PC-3 (cell line): ENCODE measurements at regions of chr10 and their contacts with region 1.

Region 1: GRCh38 chr10:33008499-33009243 is 50.6 kb upstream of the ITGB1 start:
- DNase-seq: peak; percentile 100
- ATAC-seq: peak; percentile 12
- H3K4me3 ChIP-seq: peak overlapping the region; percentile 29
- H3K27ac ChIP-seq: peak overlapping the region; percentile 66
- H3K4me1 ChIP-seq: peaks cover 63% of the 10 kb centered on the region
- H3K27me3 ChIP-seq: no peaks in the 10 kb centered on the region
- CTCF ChIP-seq: peak; percentile 100

Region 2: GRCh38 chr10:32378363-32379317 is 630.0 kb before region 1 on chr10:
- CTCF ChIA-PET with region 1: interaction called, 3 read pairs
- POLR2A ChIA-PET with region 1: interaction called, 3 read pairs
- intact Hi-C with region 1: loop called (anchors 2 kb)
- DNase-seq: peak; percentile 96
- ATAC-seq: peak; percentile 90
- H3K4me3 ChIP-seq: peak overlapping the region; percentile 74
- H3K27ac ChIP-seq: peak overlapping the region; percentile 68
- H3K4me1 ChIP-seq: peaks cover 55% of the 10 kb centered on the region
- H3K27me3 ChIP-seq: no peaks in the 10 kb centered on the region
- CTCF ChIP-seq: no peak

Region 3: DNA sequence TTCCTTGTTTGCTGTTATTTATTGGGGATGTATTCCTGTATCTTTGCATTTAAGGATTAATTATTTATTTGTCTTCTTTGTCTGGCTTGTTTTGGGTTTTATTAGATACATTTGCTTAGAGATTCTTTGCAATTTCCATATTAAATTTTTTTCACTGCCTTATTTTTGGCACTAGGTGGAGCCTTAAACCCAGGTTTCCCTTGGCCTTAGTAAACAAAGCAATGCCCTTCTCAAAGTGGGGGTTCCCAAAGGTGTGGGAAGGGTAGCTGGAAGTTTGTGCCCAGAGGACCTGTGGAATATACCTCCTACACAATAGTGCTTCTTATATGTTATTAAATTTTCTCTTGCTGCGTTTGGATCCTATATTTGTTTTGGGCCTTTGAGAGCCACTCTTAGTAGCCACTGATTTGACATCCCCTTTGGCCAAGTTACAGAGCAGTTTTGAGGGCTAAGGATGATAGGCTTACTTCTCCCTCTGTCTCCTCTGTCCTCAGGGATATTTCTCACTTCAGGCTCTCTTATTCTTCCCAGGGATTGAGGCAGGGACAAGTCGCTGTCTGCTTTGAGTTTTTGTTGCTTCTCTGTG is 213.0 kb before region 1 on chr10:
- CTCF ChIA-PET with region 1: interaction called, 4 read pairs
- POLR2A ChIA-PET with region 1: no interaction called
- intact Hi-C with region 1: loop called (anchors 1 kb)
- DNase-seq: peak; percentile 73
- ATAC-seq: peak; percentile 73
- H3K4me3 ChIP-seq: no peak overlapping the region
- H3K27ac ChIP-seq: no peak overlapping the region
- H3K4me1 ChIP-seq: no peaks in the 10 kb centered on the region
- H3K27me3 ChIP-seq: no peaks in the 10 kb centered on the region
- CTCF ChIP-seq: peak; percentile 99

Region 4: GRCh38 chr10:32929632-32930031 is 79.0 kb before region 1 on chr10:
- CTCF ChIA-PET with region 1: no interaction called
- POLR2A ChIA-PET with region 1: no interaction called
- intact Hi-C with region 1: no loop called
- DNase-seq: peak; percentile 71
- ATAC-seq: peak; percentile 65
- H3K4me3 ChIP-seq: no peak overlapping the region
- H3K27ac ChIP-seq: 0 out of 2 replicates have a peak overlapping the region, but pooled peaks have one; percentile 1
- H3K4me1 ChIP-seq: peaks cover 11% of the 10 kb centered on the region; the same call in 1 of the 2 replicates
- H3K27me3 ChIP-seq: no peaks in the 10 kb centered on the region
- CTCF ChIP-seq: no peak

Region 5: DNA sequence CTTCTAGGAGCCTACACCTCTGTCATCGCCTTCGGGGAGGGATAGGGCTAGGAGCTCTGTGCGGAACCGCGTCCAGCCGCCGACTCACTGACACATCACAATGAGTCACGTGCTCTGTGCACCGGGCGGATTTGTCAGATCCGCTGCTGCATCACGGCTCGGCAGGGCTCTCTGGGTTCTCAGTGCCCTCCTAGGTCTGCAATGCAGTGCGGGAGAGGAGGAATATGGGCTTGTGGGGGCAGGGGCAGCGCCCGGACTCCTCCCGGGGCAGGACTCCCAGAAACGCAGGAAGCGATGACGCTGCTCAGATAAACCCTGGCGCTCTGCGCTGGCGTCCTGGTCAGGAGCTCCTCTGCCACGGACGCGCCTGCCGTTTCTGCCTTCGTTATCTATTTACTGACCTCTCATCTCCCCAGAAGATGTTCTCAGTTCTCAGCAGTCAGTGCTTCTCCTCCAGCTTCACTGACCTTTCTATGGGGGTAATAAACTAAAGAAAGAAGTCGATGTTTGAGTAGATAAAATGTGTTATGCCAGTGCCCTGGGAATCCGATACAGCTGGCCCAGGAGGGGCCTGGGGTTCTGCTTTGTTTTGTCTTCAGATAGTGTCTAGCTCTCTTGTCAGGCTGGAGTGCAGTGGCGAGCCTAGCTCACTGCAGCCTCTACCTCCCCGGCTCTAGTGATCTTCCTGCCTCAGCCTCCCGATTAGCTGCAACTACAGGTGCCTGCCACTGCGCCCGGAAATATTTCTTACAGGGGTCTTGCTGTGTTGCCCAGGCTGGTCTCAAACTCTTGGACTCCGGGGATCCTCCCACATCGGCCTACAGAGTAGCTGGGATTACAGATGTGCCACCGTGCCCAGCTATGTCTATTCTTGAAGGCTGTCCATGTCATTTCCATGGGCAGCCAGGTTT is 27.9 kb before region 1 on chr10:
- CTCF ChIA-PET with region 1: interaction called, 17 read pairs
- POLR2A ChIA-PET with region 1: interaction called, 14 read pairs
- intact Hi-C with region 1: loop called (anchors 1 kb)
- DNase-seq: peak; percentile 100
- ATAC-seq: peak; percentile 83
- H3K4me3 ChIP-seq: peak overlapping the region; percentile 61
- H3K27ac ChIP-seq: peak overlapping the region; percentile 94
- H3K4me1 ChIP-seq: peaks cover 63% of the 10 kb centered on the region
- H3K27me3 ChIP-seq: no peaks in the 10 kb centered on the region
- CTCF ChIP-seq: no peak

Region 6: GRCh38 chr10:33134011-33134751 is 125.5 kb after region 1 on chr10:
- CTCF ChIA-PET with region 1: interaction called, 4 read pairs
- POLR2A ChIA-PET with region 1: no interaction called
- intact Hi-C with region 1: loop called (anchors 1 kb)
- DNase-seq: peak; percentile 100
- ATAC-seq: peak; percentile 95
- H3K4me3 ChIP-seq: no peak overlapping the region; the same call in 1 of the 2 replicates
- H3K27ac ChIP-seq: peak overlapping the region; percentile 65
- H3K4me1 ChIP-seq: peaks cover 41% of the 10 kb centered on the region
- H3K27me3 ChIP-seq: no peaks in the 10 kb centered on the region
- CTCF ChIP-seq: no peak